ENCODE measurements at regions of chr20 and their contacts with region 1.

Region 1: DNA sequence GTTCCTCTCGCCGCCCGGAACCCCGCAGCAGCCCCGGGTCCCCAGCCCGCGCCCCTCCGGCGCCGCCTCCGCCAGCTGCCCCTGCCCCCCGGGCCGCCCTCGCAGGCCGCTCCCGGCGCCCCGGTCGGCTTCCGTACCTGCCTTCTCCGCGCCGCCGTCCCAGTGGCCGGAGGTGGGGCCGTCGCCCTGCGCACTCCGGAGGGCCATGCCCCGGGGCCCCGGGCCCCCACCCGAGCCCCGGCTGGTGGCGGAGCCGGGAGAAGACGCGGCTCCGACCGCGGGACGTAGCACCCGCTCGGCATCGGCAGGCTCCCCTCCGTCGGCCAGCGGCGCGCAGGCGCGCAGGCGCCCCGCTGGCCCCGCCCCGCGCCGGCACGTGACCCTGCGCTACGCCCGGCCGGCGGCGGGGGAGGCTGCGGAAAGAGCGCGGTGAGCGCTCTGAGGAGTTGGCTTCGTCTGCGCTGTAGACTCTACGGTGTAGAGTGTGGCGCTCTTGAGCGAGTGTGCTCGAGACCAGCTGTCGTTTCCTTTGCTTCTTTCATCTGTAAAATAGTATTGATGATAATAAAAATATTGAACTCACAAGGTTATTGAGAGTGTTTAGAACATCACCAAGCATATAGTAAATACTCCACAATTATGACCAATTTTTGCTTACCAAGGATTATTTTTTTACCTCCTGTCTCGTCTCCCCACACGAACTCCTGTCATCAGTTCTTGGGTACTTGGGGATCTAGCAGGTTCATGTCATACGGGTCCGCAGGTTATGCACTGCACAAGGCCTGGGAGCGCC is at the start of gene TBC1D20:
- DNase-seq: peak; percentile 64 to 81
- ATAC-seq: peak; percentile 95 to 97
- H3K4me3 ChIP-seq: peak within 1 kb of the TSS; percentile 63 to 92 (median 82)
- H3K27ac ChIP-seq: peak within 1 kb of the TSS; percentile 79 to 96 (median 92)
- H3K4me1 ChIP-seq: peaks cover 32 to 40% of the 10 kb centered on the region in 2 donors
- H3K27me3 ChIP-seq: no peaks in the 10 kb centered on the region
- CTCF ChIP-seq: peak in 2 of 5 experiments; percentile 29 to 32
- POLR2A ChIP-seq: peak; percentile 92 to 94
- total RNA-seq, gene TBC1D20: 28.9 to 39.0 (median 34.0) TPM

Region 2: GRCh38 chr20:407133-407952 is 55.1 kb before region 1 on chr20:
- in situ Hi-C with region 1: no loop called
- intact Hi-C with region 1: loop called (anchors 1 kb)
- DNase-seq: peak; percentile 57 to 73
- ATAC-seq: peak; percentile 71 to 77
- H3K4me3 ChIP-seq: peak overlapping the region; percentile 63 to 94 (median 80)
- H3K27ac ChIP-seq: peak overlapping the region; percentile 95 to 98 (median 97)
- H3K4me1 ChIP-seq: peaks cover 25 to 26% of the 10 kb centered on the region in 2 donors
- H3K27me3 ChIP-seq: no peaks in the 10 kb centered on the region
- CTCF ChIP-seq: peak in 3 of 5 experiments; percentile 25 to 36 (median 28)
- POLR2A ChIP-seq: no peak

Region 3: GRCh38 chr20:433300-433975 is 29.0 kb before region 1 on chr20:
- in situ Hi-C with region 1: no loop called
- intact Hi-C with region 1: no loop called
- DNase-seq: no peak
- ATAC-seq: no peak
- H3K4me3 ChIP-seq: no peak overlapping the region
- H3K27ac ChIP-seq: peak overlapping the region in 3 of 4 donors; percentile 20 to 33 (median 30)
- H3K4me1 ChIP-seq: peaks cover 10 to 12% of the 10 kb centered on the region in 2 donors
- H3K27me3 ChIP-seq: no peaks in the 10 kb centered on the region
- CTCF ChIP-seq: no peak
- POLR2A ChIP-seq: no peak

Region 4: GRCh38 chr20:444862-445426 is 17.5 kb before region 1 on chr20:
- in situ Hi-C with region 1: no loop called
- intact Hi-C with region 1: loop called (anchors 2 kb)
- DNase-seq: peak in 1 of 2 donors; percentile 38
- ATAC-seq: peak; percentile 61 to 75
- H3K4me3 ChIP-seq: no peak overlapping the region
- H3K27ac ChIP-seq: peak overlapping the region; percentile 21 to 80 (median 70)
- H3K4me1 ChIP-seq: peaks cover 27 to 38% of the 10 kb centered on the region in 2 donors
- H3K27me3 ChIP-seq: no peaks in the 10 kb centered on the region
- CTCF ChIP-seq: no peak
- POLR2A ChIP-seq: no peak

Measured in gastrocnemius medialis (tissue), 4 donors.